ENCODE measurements at regions of chr5 and their contacts with region 1.

Region 1: GRCh38 chr5:138449501-138450239 is 10.8 kb downstream of the REEP2 start:
- DNase-seq: peak; percentile 87 to 92
- H3K4me3 ChIP-seq: no peak overlapping the region
- H3K27ac ChIP-seq: no peak overlapping the region
- H3K4me1 ChIP-seq: peaks cover 0 to 12% (median 9%) of the 10 kb centered on the region in 4 donors
- H3K27me3 ChIP-seq: no peaks in the 10 kb centered on the region
- CTCF ChIP-seq: peak; percentile 95 to 98

Region 2: DNA sequence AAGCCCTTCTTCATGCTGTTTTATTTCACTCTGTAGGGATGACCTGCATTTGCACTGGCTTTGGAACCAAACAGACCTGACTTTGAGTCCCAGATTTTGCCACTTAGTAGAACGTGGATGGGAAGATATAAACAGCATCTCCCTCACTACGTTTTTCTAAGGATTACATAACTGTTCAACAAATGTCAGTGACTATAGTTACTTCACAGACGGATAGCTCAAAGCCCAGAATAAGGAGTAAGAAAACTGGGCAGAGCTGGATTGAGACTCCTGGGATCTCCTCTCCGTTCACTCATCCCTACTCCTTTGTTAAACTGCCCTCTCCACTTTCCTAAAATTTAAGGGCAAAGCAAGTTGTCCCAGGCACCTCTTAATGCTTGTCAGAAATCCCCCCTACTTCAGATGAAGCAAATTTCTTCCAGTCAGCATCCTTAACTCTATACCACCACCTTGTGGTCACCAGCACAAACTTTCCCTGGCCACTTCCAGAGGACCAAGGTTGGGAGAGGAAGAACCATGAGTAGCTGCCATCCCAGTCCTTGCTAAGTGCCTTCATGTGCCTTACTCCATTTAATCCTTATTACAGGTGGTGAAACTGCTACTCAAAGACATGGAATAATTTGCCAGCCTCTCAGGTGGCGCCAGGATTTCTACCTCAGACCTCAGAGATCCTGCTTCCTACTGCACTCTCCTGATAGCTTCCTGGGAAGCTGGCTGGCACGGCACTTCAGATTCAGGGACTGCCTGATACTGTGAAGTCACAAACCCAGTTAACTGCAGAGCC is 54.0 kb after region 1 on chr5:
- intact Hi-C with region 1: loop called (anchors 2 kb)
- DNase-seq: peak in 1 of 2 donors; percentile 39
- H3K4me3 ChIP-seq: no peak overlapping the region
- H3K27ac ChIP-seq: peak overlapping the region in 1 of 2 donors; percentile 50
- H3K4me1 ChIP-seq: peaks cover 0 to 23% (median 19%) of the 10 kb centered on the region in 4 donors
- H3K27me3 ChIP-seq: no peaks in the 10 kb centered on the region
- CTCF ChIP-seq: peak; percentile 74 to 86

Region 3: GRCh38 chr5:139273572-139274289 is 824.1 kb after region 1 on chr5:
- intact Hi-C with region 1: loop called (anchors 10 kb)
- DNase-seq: peak; percentile 81 to 91
- H3K4me3 ChIP-seq: peak overlapping the region; percentile 56 to 62
- H3K27ac ChIP-seq: peak overlapping the region; percentile 57 to 62
- H3K4me1 ChIP-seq: peaks cover 0 to 25% (median 14%) of the 10 kb centered on the region in 4 donors
- H3K27me3 ChIP-seq: no peaks in the 10 kb centered on the region
- CTCF ChIP-seq: peak; percentile 28 to 33